CD8-positive, alpha-beta T cell (primary cell): ENCODE measurements at regions of chr6 and their contacts with region 1.

Region 1: DNA sequence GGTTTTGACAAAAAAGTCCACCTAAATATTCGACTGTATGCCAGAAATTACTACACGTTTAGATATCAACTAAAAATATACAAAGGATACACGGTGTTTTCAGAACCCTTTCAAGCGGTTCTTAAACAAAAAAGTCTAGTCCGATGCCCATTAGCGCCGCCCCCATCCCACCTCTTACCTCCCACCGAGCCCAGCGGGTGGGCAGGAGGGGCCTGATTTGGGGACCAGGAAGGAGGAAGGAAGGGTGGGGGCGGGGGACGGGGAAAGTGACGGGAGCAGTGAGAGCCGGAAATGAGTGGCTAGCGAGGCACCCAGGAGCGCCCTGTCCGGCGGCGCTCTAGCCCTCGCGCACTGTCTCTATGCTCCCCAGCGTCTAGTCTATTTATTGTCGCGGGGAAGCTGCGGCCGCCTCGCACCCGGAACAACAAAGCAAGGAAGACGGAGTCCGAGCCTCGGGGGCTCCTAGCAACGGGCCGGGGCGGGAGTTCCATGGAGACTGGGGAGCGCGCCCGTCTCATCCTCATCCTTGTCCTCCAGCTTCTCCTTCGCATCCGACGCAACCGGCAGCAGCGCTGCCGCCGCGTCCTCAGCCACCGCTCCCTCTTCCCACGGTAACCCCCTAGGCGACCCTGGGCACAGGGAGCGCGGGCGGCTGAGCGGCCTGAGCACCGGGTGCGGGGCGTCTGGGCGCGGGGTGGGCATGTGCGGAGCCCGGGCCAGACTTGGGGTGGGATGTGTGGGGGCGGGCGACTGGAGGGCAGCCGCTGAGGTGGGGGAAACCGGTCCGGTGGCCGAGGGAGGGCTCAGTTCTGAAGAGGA is at the start of gene TBPL1:
- DNase-seq: peak; percentile 85 to 97 (median 92)
- ATAC-seq: peak; percentile 85
- H3K4me3 ChIP-seq: peak within 1 kb of the TSS; percentile 73 to 82
- H3K4me3 Mint-ChIP-seq: peak within 1 kb of the TSS; percentile 94
- H3K27ac ChIP-seq: peak within 1 kb of the TSS; percentile 55 to 90
- H3K27ac Mint-ChIP-seq: peak within 1 kb of the TSS; percentile 96
- H3K4me1 ChIP-seq: peaks cover 20% of the 10 kb centered on the region
- H3K4me1 Mint-ChIP-seq: peaks cover 50% of the 10 kb centered on the region
- H3K27me3 ChIP-seq: no peaks in the 10 kb centered on the region
- H3K27me3 Mint-ChIP-seq: no peaks in the 10 kb centered on the region
- CTCF ChIP-seq: no peak
- total RNA-seq, gene TBPL1: 47.8 to 48.7 TPM

Region 2: GRCh38 chr6:132512638-132513632 is 1440.1 kb before region 1 on chr6 and contains the start of gene STX7:
- CTCF ChIA-PET with region 1: no interaction called
- POLR2A ChIA-PET with region 1: interaction called, 3 read pairs
- intact Hi-C with region 1: loop called in 1 of 2 experiments (anchors 1 kb)
- DNase-seq: peak; percentile 67 to 91 (median 85)
- ATAC-seq: peak; percentile 93
- H3K4me3 ChIP-seq: peak within 1 kb of the TSS; percentile 75 to 90
- H3K4me3 Mint-ChIP-seq: peak within 1 kb of the TSS; percentile 97
- H3K27ac ChIP-seq: peak within 1 kb of the TSS; percentile 43 to 57
- H3K27ac Mint-ChIP-seq: peak within 1 kb of the TSS; percentile 91
- H3K4me1 ChIP-seq: peaks cover 8% of the 10 kb centered on the region
- H3K4me1 Mint-ChIP-seq: peaks cover 35% of the 10 kb centered on the region
- H3K27me3 ChIP-seq: no peaks in the 10 kb centered on the region
- H3K27me3 Mint-ChIP-seq: no peaks in the 10 kb centered on the region
- CTCF ChIP-seq: no peak
- total RNA-seq, gene STX7: 5.4 to 5.5 TPM

Region 3: DNA sequence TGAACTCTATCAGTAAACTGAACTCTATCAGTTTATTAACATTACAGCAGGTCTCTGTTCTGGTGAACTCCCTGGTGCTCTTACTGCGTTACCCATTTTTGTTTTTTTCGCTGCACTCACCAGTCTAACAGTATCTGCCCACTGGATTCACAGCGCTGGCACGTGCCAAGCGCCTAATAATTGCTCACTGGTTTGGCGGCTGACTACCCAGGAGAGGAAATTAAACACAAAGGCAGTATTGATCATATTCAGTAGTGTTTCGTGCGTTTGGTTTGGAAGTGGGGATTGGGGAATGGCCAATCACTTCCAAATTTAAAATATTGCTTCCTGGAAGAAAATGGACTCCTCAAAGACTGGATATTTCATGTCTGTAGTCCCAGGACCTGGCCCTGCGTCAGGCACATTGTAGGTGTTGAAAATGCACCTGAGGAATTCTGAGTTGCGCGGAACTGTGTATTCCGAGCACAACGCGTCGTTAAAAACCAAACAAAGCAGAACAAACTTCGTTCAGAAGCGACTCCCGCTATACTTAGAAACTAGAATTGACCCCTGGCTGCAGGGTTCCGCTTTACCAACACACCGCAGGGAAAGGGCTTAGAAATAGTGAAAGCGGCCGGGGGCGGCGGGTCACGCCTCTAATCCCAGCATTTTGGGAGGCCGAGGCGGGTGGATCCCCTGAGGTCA is 1139.7 kb before region 1 on chr6:
- CTCF ChIA-PET with region 1: no interaction called
- POLR2A ChIA-PET with region 1: interaction called, 10 read pairs
- intact Hi-C with region 1: loop called (anchors 1 to 2 kb)
- DNase-seq: peak in 8 of 9 experiments; percentile 23 to 81 (median 40)
- ATAC-seq: peak; percentile 17
- H3K4me3 ChIP-seq: peak overlapping the region; percentile 83 to 87
- H3K4me3 Mint-ChIP-seq: peak overlapping the region; percentile 97
- H3K27ac ChIP-seq: peak overlapping the region; percentile 69 to 87
- H3K27ac Mint-ChIP-seq: peak overlapping the region; percentile 99
- H3K4me1 ChIP-seq: peaks cover 25% of the 10 kb centered on the region
- H3K4me1 Mint-ChIP-seq: peaks cover 49% of the 10 kb centered on the region
- H3K27me3 ChIP-seq: no peaks in the 10 kb centered on the region
- H3K27me3 Mint-ChIP-seq: no peaks in the 10 kb centered on the region
- CTCF ChIP-seq: no peak

Region 4: GRCh38 chr6:133973109-133973971 is 20.3 kb after region 1 on chr6:
- CTCF ChIA-PET with region 1: interaction called, 16 read pairs
- POLR2A ChIA-PET with region 1: interaction called, 3 read pairs
- intact Hi-C with region 1: loop called in 1 of 2 experiments (anchors 2 kb)
- DNase-seq: peak in 2 of 9 experiments; percentile 58 to 72
- ATAC-seq: peak; percentile 79
- H3K4me3 ChIP-seq: no peak overlapping the region
- H3K4me3 Mint-ChIP-seq: no peak overlapping the region
- H3K27ac ChIP-seq: no peak overlapping the region
- H3K27ac Mint-ChIP-seq: no peak overlapping the region
- H3K4me1 ChIP-seq: no peaks in the 10 kb centered on the region
- H3K4me1 Mint-ChIP-seq: peaks cover 61% of the 10 kb centered on the region
- H3K27me3 ChIP-seq: no peaks in the 10 kb centered on the region
- H3K27me3 Mint-ChIP-seq: no peaks in the 10 kb centered on the region
- CTCF ChIP-seq: peak; percentile 89

Region 5: GRCh38 chr6:135114355-135115145 is 1161.5 kb after region 1 on chr6:
- CTCF ChIA-PET with region 1: no interaction called
- POLR2A ChIA-PET with region 1: no interaction called
- intact Hi-C with region 1: loop called in 1 of 2 experiments (anchors 10 kb)
- DNase-seq: no peak
- ATAC-seq: peak; percentile 35
- H3K4me3 ChIP-seq: no peak overlapping the region
- H3K4me3 Mint-ChIP-seq: no peak overlapping the region
- H3K27ac ChIP-seq: no peak overlapping the region
- H3K27ac Mint-ChIP-seq: peak overlapping the region; percentile 29
- H3K4me1 ChIP-seq: peaks cover 40% of the 10 kb centered on the region
- H3K4me1 Mint-ChIP-seq: peaks cover 64% of the 10 kb centered on the region
- H3K27me3 ChIP-seq: no peaks in the 10 kb centered on the region
- H3K27me3 Mint-ChIP-seq: no peaks in the 10 kb centered on the region
- CTCF ChIP-seq: no peak

Region 6: DNA sequence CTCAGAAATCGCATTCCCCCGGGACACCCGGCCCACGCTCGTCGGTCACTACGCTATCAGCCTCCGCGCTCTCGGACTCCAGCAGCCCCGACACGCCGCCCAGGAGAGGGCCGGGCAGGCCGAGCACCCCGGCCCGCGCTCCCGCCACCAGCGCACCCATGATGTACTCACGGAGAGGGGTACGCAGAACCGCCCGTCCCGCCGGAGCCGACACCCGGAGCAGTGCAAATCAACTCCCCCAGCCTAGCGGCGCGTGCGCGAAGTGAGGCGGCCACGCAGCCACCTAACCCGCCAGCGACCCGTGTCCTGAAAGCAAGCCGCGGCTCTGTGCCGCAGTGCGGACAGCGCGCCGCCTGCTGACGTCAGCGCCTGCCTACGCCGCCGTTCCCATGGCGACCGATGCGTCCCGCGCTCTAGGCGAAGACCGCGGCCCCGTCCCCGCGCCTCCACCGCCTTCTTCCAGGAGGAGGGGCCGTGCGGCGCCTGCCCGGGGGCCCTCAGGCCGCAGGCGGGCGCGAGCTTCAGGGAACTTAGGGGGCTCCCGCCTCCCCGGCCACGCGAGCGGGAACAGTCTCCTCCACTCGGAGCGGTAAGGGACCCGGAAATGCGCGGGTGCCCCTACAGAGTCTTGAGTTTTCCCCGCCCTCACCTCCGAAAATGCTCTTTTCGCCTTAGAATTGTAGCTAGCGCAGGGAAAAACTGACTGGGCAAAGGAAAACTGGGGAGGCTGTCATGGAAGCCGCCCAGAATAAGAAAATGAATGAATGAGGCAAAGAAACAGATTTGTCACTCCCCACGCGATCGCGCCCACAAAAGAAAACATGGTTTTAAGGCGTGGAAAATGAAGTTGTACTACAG is 1544.6 kb after region 1 on chr6 and contains the start of gene AHI1:
- CTCF ChIA-PET with region 1: no interaction called
- POLR2A ChIA-PET with region 1: no interaction called
- intact Hi-C with region 1: loop called (anchors 2 to 5 kb)
- DNase-seq: peak; percentile 81 to 95 (median 86)
- ATAC-seq: peak; percentile 72
- H3K4me3 ChIP-seq: peak within 1 kb of the TSS; percentile 87 to 95
- H3K4me3 Mint-ChIP-seq: no peak within 1 kb of the TSS
- H3K27ac ChIP-seq: peak within 1 kb of the TSS; percentile 91 to 98
- H3K27ac Mint-ChIP-seq: no peak within 1 kb of the TSS
- H3K4me1 ChIP-seq: peaks cover 6% of the 10 kb centered on the region
- H3K4me1 Mint-ChIP-seq: peaks cover 8% of the 10 kb centered on the region
- H3K27me3 ChIP-seq: no peaks in the 10 kb centered on the region
- H3K27me3 Mint-ChIP-seq: no peaks in the 10 kb centered on the region
- CTCF ChIP-seq: no peak
- total RNA-seq, gene AHI1: 16.0 to 17.9 TPM